ENCODE measurements at regions of chr10 and their contacts with region 1.

Region 1: GRCh38 chr10:8403711-8404371 is 349.4 kb downstream of the GATA3 start:
- DNase-seq: no peak
- H3K27ac ChIP-seq: no peak overlapping the region
- CTCF ChIP-seq: no peak

Region 2: DNA sequence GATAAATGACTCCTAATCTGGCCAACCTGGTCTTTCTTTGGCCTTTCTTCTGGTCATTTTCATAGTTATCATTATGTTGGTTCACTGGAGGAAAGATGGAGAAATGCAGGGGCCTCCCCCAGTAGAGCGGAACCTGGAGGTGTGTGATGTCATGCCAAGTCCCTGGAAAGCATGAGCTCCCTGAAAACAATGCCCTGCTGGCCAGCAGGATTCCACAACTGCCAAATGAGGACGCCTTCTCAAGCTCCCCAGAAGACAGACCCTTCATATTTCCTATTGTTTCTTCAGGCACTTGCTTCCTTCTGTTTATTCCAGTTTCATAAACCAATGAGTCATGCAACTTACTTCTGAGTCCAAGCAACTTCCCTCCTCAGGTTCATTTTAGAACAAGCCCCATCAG is 10.3 kb before region 1 on chr10:
- CTCF ChIA-PET with region 1: interaction called, 10 read pairs
- POLR2A ChIA-PET with region 1: no interaction called
- DNase-seq: no peak
- H3K27ac ChIP-seq: no peak overlapping the region
- CTCF ChIP-seq: no peak

Region 3: DNA sequence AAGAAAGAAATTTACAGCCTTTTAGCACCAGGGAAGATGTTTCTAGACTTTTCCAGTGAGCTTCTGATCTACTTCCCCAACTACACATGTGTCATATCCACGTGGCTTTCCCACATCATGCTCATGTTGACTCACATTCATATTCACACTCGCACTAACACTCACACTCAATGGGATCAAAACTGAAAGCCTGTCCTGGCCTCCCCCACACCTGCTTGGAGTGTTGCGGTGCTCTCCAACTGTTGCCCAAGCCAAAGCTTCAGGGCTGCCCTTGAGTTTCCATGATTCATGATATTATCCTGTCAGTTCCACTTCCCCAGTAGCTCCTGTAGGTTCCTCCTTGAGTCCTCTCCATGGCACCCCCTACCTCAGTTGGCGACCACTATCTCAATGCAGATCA is 95.0 kb after region 1 on chr10:
- CTCF ChIA-PET with region 1: no interaction called
- POLR2A ChIA-PET with region 1: no interaction called
- DNase-seq: no peak
- H3K27ac ChIP-seq: no peak overlapping the region
- CTCF ChIP-seq: no peak

Measured in RWPE1 (cell line).